ENCODE measurements at regions of chr7 and their contacts with region 1.

Region 1: DNA sequence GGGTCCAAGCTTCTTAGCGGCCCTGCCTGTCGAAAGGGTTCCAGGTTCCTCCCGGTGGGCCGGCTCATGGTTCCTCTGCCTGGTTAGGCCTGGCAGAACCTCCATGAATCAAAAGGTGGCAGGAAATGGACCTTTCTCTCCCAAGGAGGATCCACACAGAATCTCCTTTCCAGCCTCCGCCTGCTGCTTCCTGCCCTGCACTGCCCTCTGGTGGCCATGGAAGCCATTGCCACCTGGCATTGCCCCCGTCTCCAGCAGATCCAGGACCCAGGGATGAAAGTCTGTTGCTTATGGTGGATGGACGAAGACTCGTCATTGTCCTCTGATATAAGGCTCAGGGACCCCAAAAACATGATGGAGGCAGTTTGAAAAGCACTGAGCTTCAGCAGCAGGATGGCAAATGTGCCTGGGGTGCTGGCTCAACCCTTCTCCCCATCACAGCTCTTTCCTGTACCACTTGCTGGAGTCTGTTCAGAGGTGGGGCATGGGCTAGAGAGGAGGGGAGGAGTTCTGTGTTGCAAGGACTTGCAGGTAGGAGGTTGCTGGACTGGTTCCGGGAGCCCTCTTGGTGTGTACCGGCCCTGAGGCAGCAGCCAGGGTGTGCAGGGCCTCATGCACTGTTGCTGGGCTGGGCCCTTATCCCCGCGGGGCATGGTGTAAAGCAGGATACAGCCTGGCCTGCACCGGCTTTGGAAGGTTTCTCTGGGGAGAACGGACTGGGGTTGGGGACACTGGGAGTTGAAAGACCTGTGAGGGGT is 11.3 kb upstream of the INMT start:
- DNase-seq: peak; percentile 86
- ATAC-seq: peak; percentile 41
- H3K4me3 Mint-ChIP-seq: no peak overlapping the region
- H3K27ac Mint-ChIP-seq: no peak overlapping the region
- H3K4me1 Mint-ChIP-seq: peaks cover 30% of the 10 kb centered on the region
- H3K27me3 Mint-ChIP-seq: no peaks in the 10 kb centered on the region

Region 2: GRCh38 chr7:30727061-30727945 is 13.3 kb before region 1 on chr7:
- POLR2A ChIA-PET with region 1: interaction called, 61 read pairs
- DNase-seq: peak; percentile 65
- ATAC-seq: peak; percentile 91
- H3K4me3 Mint-ChIP-seq: peak overlapping the region; percentile 94
- H3K27ac Mint-ChIP-seq: peak overlapping the region; percentile 98
- H3K4me1 Mint-ChIP-seq: peaks cover 55% of the 10 kb centered on the region
- H3K27me3 Mint-ChIP-seq: peaks cover 2% of the 10 kb centered on the region